ENCODE measurements at regions of chr14 and their contacts with region 1.

Region 1: GRCh38 chr14:101875727-101876554 is 88.4 kb upstream of the DYNC1H1 start:
- DNase-seq: peak; percentile 36 to 77 (median 62)
- H3K4me3 ChIP-seq: peak overlapping the region in 5 of 7 experiments; percentile 16 to 62 (median 44)
- H3K27ac ChIP-seq: peak overlapping the region; percentile 97 to 98
- H3K4me1 ChIP-seq: peaks cover 22 to 69% (median 58%) of the 10 kb centered on the region in 4 experiments
- H3K27me3 ChIP-seq: no peaks in the 10 kb centered on the region

Region 2: GRCh38 chr14:101809671-101810514 is 66.0 kb before region 1 on chr14:
- CTCF ChIA-PET with region 1: no interaction called
- POLR2A ChIA-PET with region 1: interaction called, 10 read pairs
- DNase-seq: peak; percentile 95 to 98 (median 98)
- H3K4me3 ChIP-seq: peak overlapping the region; percentile 27 to 97 (median 83)
- H3K27ac ChIP-seq: peak overlapping the region; percentile 99 to 100
- H3K4me1 ChIP-seq: peaks cover 10 to 25% (median 18%) of the 10 kb centered on the region in 4 experiments
- H3K27me3 ChIP-seq: no peaks in the 10 kb centered on the region

Region 3: GRCh38 chr14:101823511-101824120 is 52.3 kb before region 1 on chr14:
- CTCF ChIA-PET with region 1: no interaction called
- POLR2A ChIA-PET with region 1: no interaction called
- DNase-seq: no peak
- H3K4me3 ChIP-seq: no peak overlapping the region
- H3K27ac ChIP-seq: peak overlapping the region; percentile 95 to 98
- H3K4me1 ChIP-seq: peaks cover 23 to 33% (median 26%) of the 10 kb centered on the region in 4 experiments
- H3K27me3 ChIP-seq: no peaks in the 10 kb centered on the region

Region 4: DNA sequence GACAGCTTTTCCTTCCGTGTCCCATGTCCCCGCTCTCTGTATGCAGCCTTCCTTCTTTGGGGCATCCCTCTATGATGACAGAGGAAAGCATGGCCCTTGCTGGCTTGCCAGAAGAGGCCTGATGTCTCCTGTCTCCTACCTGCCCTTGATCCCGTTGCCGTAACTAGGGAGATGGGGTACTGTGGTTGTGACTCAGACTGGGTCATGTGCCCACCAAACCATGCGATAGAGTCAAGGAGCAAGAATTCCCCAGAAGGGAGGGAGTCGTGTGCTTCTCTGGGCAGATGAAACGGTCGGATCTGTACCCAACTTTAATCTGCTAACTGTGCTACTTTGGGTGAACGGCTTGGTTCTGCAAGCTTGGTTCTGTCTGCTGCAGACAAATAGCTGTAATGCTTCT is 10.7 kb before region 1 on chr14:
- CTCF ChIA-PET with region 1: interaction called, 12 read pairs
- POLR2A ChIA-PET with region 1: no interaction called
- DNase-seq: no peak
- H3K4me3 ChIP-seq: no peak overlapping the region
- H3K27ac ChIP-seq: no peak overlapping the region
- H3K4me1 ChIP-seq: peaks cover 0 to 1% (median 0%) of the 10 kb centered on the region in 4 experiments
- H3K27me3 ChIP-seq: no peaks in the 10 kb centered on the region

Region 5: GRCh38 chr14:101889898-101890297 is 14.0 kb after region 1 on chr14:
- CTCF ChIA-PET with region 1: interaction called, 17 read pairs
- POLR2A ChIA-PET with region 1: no interaction called
- DNase-seq: peak; percentile 60 to 77 (median 74)
- H3K4me3 ChIP-seq: no peak overlapping the region
- H3K27ac ChIP-seq: no peak overlapping the region
- H3K4me1 ChIP-seq: no peaks in the 10 kb centered on the region
- H3K27me3 ChIP-seq: no peaks in the 10 kb centered on the region